Activated T-helper 1 cell treated with anti-CD3 and anti-CD28 coated beads, Interleukin-12 subunit alpha, Interleukin-12 subunit beta, Interleukin-2, Interleukin-4 antibody, amounts not matched to agents 30 ng/mL and 10 ng/mL and 1 ng/mL, durations not matched to agents 14 hours and 24 hours and 36 hours (primary cell): ENCODE measurements at regions of chr10 and their contacts with region 1.

Region 1: DNA sequence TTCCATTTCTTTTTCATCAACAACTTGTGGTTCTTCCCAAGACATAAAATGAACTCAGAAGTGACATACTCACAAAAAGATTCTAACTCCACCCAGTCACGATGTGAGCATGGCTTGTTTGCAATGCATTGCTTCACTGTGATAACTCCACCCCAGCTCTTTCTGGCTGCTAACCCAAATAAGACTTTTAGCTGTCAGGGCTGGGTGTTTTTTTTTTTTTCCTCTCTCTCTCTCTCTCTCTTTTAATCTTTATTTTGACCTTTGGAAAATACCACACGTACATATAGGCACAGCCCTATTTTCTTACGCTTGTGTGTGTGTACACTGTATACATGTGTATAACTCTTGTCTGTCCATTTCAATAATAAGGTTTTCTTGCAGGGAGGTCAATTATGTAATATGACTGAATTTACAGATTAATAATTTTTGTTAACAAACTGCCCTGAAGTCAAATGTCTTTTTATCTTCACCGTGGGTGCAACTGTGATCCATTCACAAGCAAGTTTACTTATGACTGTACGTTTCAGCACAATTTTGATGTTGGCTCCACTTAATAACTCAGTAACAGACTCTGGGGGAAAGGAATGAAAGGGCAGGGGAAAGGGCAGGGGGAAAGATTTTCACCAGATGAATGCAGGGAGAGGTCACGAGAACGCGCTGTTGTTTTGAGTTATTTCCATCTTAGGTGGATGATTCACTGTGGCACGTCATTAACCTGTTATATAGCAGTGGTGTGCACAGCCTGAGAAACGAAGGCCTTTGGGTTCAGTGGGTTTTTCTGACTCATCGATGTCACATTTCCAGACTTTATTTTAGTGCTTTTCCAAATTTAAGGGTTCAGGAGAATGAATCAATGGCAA is 49.1 kb downstream of the APBB1IP start:
- DNase-seq: peak; percentile 65
- H3K4me3 Mint-ChIP-seq: peak overlapping the region; percentile 73
- H3K27ac Mint-ChIP-seq: peak overlapping the region; percentile 97
- H3K4me1 Mint-ChIP-seq: peaks cover 61% of the 10 kb centered on the region
- H3K27me3 Mint-ChIP-seq: no peaks in the 10 kb centered on the region

Region 2: DNA sequence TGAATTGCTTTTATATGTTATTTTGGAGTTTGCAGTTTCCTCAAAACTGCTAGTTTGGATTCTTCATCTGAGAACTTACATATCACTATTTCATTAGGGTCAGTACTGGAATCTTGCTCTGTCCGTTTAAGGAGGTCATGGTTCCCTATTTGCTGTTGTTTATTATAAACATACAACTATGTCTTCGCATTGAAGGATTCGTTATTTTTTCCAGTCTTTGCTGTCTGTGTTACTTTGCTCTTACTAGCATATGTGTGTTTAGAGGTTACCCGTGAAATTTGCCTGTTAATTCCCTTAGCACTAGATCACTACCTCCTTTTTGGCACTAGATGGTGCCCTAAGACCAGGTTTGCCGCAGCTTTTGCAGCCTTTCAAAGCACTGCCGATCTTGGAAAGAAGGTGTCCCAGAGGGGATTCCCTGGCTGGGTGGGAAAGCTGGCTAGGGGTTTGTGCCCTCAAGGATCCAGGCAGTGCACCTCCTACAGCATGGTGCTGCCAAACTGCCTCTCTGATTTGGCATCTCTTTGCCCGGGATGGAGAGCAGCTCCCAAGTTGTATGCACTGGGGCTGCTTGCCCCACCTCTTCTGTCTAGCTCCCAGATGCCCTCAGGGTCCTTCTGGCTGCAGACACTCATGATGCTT is 152.2 kb before region 1 on chr10:
- intact Hi-C with region 1: loop called (anchors 5 kb)
- DNase-seq: peak; percentile 50
- H3K4me3 Mint-ChIP-seq: peak overlapping the region; percentile 84
- H3K27ac Mint-ChIP-seq: peak overlapping the region; percentile 81
- H3K4me1 Mint-ChIP-seq: peaks cover 14% of the 10 kb centered on the region
- H3K27me3 Mint-ChIP-seq: no peaks in the 10 kb centered on the region

Region 3: GRCh38 chr10:26437637-26438461 is 49.4 kb before region 1 on chr10 and contains the start of gene APBB1IP:
- intact Hi-C with region 1: loop called (anchors 1 kb)
- DNase-seq: peak; percentile 40
- H3K4me3 Mint-ChIP-seq: peak within 1 kb of the TSS; percentile 95
- H3K27ac Mint-ChIP-seq: peak within 1 kb of the TSS; percentile 93
- H3K4me1 Mint-ChIP-seq: peaks cover 51% of the 10 kb centered on the region
- H3K27me3 Mint-ChIP-seq: no peaks in the 10 kb centered on the region
- total RNA-seq, gene APBB1IP: 39.6 and 43.6 TPM in 2 replicates

Region 4: GRCh38 chr10:26467639-26468038 is 19.6 kb before region 1 on chr10:
- intact Hi-C with region 1: loop called (anchors 1 kb)
- DNase-seq: no peak
- H3K4me3 Mint-ChIP-seq: peak overlapping the region; percentile 15
- H3K27ac Mint-ChIP-seq: peak overlapping the region; percentile 42
- H3K4me1 Mint-ChIP-seq: peaks cover 62% of the 10 kb centered on the region
- H3K27me3 Mint-ChIP-seq: no peaks in the 10 kb centered on the region

Region 5: DNA sequence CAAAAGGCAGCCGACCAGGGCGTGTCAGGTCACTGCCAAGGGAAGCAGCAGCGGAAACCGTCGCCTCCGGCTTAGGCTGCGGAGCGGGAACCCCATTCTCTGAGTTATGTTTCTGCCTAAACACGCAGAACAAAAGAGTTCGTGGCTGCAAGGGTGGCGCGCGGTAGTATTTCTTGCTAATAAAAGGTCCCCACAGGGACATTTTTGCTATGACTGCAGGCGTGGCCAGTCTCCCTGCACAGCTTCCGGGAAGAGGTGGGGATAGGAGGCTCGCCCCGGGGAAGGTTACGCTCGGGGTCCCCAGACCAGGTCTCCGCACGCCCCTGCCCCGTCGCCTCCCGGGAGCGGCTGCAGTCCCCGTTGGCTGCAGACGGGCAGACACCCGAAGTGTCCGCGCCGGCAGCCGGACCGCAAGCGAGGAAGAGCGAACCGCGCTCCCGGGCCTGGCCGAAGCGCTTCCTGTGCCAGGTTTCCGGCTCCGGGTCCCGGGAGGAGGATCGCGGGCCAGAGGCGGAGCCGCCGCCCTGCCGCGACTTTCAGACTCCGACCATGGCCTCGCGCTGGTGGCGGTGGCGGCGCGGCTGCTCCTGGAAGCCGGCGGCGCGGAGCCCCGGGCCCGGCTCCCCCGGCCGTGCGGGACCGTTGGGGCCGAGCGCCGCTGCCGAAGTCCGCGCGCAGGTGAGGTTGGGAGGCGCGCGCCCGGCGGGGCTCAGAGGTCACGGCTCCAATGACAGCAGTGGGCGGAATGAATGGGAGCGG is 210.1 kb after region 1 on chr10 and contains the start of gene PDSS1:
- intact Hi-C with region 1: loop called (anchors 2 kb)
- DNase-seq: peak; percentile 64
- H3K4me3 Mint-ChIP-seq: peak within 1 kb of the TSS; percentile 100
- H3K27ac Mint-ChIP-seq: peak within 1 kb of the TSS; percentile 94
- H3K4me1 Mint-ChIP-seq: peaks cover 31% of the 10 kb centered on the region
- H3K27me3 Mint-ChIP-seq: no peaks in the 10 kb centered on the region
- total RNA-seq, gene PDSS1: 39.3 and 43.1 TPM in 2 replicates

Region 6: GRCh38 chr10:27099916-27100812 is 612.9 kb after region 1 on chr10 and contains the start of gene ANKRD26:
- intact Hi-C with region 1: loop called (anchors 2 kb)
- DNase-seq: peak; percentile 96
- H3K4me3 Mint-ChIP-seq: peak within 1 kb of the TSS; percentile 86
- H3K27ac Mint-ChIP-seq: peak within 1 kb of the TSS; percentile 98
- H3K4me1 Mint-ChIP-seq: peaks cover 43% of the 10 kb centered on the region
- H3K27me3 Mint-ChIP-seq: no peaks in the 10 kb centered on the region
- total RNA-seq, gene ANKRD26: 4.3 and 7.0 TPM in 2 replicates

Region 7: DNA sequence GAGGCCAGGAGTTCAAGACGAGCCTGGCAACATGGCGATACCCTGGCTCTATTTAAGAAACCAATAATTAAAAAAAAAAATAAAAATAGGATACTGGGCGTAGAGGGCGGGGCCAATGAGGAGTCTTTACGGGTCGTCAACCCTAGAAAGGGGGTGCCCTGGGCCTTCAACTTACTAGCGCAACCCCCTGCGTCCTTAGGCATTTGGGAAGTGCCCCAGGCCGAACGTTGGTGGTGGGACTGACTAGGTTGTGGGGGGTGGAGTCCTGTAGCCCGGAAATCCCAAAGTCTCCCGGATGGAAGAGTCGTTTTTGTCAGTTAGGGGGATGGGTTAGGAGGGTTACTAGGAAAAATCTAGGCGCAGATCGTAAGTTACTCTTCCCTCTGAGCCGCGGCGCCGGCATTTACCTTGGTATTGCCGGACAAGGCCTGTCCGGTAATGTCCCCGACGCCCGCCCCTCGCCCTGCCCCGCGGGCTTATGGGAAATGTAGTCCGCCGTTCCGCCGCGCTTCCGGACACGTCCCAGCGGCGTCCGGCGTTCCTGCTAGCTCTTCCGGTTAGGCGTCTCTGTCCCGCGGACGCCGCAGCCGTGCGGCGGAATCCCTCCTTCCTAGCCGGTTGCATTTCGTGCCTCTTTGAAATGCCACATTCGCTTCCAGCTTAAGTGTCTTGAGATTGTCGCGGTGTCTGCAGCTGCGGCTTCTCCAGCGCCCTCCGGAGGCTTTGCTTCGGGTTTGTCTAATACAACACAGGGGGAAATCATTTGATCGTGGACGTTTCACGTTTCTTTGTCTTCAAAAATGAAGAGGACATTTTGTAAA is 754.6 kb after region 1 on chr10:
- intact Hi-C with region 1: loop called (anchors 5 kb)
- DNase-seq: peak; percentile 87
- H3K4me3 Mint-ChIP-seq: peak overlapping the region; percentile 89
- H3K27ac Mint-ChIP-seq: peak overlapping the region; percentile 93
- H3K4me1 Mint-ChIP-seq: peaks cover 29% of the 10 kb centered on the region
- H3K27me3 Mint-ChIP-seq: no peaks in the 10 kb centered on the region